Heart right ventricle (tissue), 16 donors: ENCODE measurements at regions of chr7 and their contacts with region 1.

Region 1: DNA sequence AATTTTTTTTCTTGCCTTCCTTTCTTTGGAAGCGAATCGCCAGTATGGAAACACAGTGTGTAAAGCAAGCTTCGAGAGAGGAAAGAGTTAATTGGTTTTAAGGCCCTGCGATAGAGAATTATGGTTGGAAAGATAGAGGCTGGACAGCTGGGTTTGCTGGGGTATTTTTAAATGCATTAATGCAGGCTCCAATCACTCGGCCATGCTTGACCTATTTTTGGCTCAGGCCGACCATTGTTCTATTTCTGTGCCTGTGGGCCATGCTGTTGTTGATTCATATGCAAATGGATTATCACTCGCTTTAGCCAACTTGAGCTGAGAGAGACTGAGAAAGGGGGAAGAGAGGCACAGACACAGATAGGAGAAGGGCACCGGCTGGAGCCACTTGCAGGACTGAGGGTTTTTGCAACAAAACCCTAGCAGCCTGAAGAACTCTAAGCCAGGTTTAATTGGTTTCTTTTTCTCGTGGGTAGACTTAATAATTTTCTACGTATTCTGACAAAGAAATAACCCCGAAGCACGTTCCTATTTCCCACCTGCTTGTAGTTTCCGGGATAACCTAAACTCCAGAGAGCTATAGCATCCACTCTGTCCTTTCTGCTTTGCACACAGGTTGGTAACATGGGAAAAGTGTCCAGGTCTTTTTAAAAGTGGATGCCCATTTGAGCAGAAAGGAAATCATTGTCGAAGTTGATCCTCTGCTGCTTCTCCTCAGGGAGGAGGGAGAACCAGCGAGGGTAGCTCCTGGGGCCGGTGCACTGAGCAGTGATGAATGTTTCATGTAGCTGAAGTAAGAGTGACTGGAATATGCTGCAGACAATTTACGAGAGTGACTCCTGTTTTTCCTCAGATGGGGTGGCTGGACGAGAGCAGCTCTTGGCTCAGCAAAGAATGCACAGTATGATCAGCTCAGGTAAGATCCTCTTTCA is at the start of gene HDAC9:
- DNase-seq: peak; percentile 17 to 73
- ATAC-seq: peak; percentile 85 to 95 (median 92)
- H3K4me3 ChIP-seq: peak within 1 kb of the TSS; percentile 30 to 64 (median 54)
- H3K27ac ChIP-seq: peak within 1 kb of the TSS; percentile 1 to 86 (median 84)
- H3K4me1 ChIP-seq: peaks cover 0 to 43% (median 19%) of the 10 kb centered on the region in 9 donors
- H3K27me3 ChIP-seq: no peaks in the 10 kb centered on the region
- CTCF ChIP-seq: no peak
- total RNA-seq, gene HDAC9: 8.3 to 66.1 (median 43.2) TPM

Region 2: GRCh38 chr7:18278316-18278715 is 217.4 kb before region 1 on chr7:
- intact Hi-C with region 1: no loop called
- DNase-seq: no peak
- ATAC-seq: no peak
- H3K4me3 ChIP-seq: no peak overlapping the region
- H3K27ac ChIP-seq: no peak overlapping the region
- H3K4me1 ChIP-seq: no peaks in the 10 kb centered on the region
- H3K27me3 ChIP-seq: no peaks in the 10 kb centered on the region
- CTCF ChIP-seq: no peak

Region 3: GRCh38 chr7:18538554-18539250 is 43.0 kb after region 1 on chr7:
- intact Hi-C with region 1: loop called in 1 of 10 experiments (anchors 5 kb)
- DNase-seq: no peak
- ATAC-seq: no peak
- H3K4me3 ChIP-seq: no peak overlapping the region
- H3K27ac ChIP-seq: no peak overlapping the region
- H3K4me1 ChIP-seq: peaks cover 0 to 64% (median 26%) of the 10 kb centered on the region in 9 donors
- H3K27me3 ChIP-seq: no peaks in the 10 kb centered on the region
- CTCF ChIP-seq: no peak

Region 4: DNA sequence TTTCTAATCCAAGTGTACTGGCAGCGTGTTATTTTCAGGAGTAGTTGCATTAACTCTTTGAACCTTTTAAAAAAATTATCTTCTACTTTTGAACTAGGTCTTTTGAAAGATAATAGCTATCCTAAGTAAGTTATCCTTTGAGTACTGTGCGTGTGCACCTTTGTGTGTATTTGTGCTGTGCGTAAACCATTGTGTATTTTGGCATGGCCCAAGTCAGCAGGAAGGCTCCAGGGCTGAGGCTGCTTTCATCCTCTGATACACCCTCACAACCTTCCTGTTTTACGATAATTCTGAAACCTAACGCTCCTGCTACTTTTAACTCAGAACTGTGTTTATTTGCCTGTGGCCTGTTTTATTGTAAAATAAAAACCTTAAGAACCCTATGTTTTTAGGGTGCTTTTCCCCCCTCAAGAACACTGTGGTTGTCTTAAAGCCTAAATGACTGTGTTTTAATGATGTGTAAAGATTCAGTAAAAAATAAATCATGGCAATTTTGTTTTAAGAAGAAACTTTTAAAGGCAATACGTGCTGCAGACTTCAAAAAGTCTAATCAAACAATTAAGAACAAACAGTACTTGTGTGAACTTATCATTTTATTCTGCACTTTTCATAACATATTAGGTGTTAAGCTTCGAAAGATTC is 57.4 kb after region 1 on chr7:
- intact Hi-C with region 1: loop called in 1 of 10 experiments (anchors 5 kb)
- DNase-seq: no peak
- ATAC-seq: peak in 6 of 8 donors; percentile 46 to 78 (median 70)
- H3K4me3 ChIP-seq: peak overlapping the region in 1 of 10 donors; percentile 4
- H3K27ac ChIP-seq: peak overlapping the region in 8 of 10 donors; percentile 1 to 59 (median 23)
- H3K4me1 ChIP-seq: peaks cover 0 to 62% (median 44%) of the 10 kb centered on the region in 9 donors
- H3K27me3 ChIP-seq: no peaks in the 10 kb centered on the region
- CTCF ChIP-seq: no peak

Region 5: GRCh38 chr7:18570890-18571478 is 75.3 kb after region 1 on chr7:
- intact Hi-C with region 1: loop called in 5 of 10 experiments (anchors 2 to 5 kb)
- DNase-seq: no peak
- ATAC-seq: peak in 7 of 8 donors; percentile 20 to 57 (median 49)
- H3K4me3 ChIP-seq: no peak overlapping the region
- H3K27ac ChIP-seq: peak overlapping the region in 1 of 10 donors; percentile 35
- H3K4me1 ChIP-seq: peaks cover 0 to 26% (median 13%) of the 10 kb centered on the region in 9 donors
- H3K27me3 ChIP-seq: no peaks in the 10 kb centered on the region
- CTCF ChIP-seq: peak in 8 of 9 donors; percentile 9 to 72 (median 60)

Region 6: DNA sequence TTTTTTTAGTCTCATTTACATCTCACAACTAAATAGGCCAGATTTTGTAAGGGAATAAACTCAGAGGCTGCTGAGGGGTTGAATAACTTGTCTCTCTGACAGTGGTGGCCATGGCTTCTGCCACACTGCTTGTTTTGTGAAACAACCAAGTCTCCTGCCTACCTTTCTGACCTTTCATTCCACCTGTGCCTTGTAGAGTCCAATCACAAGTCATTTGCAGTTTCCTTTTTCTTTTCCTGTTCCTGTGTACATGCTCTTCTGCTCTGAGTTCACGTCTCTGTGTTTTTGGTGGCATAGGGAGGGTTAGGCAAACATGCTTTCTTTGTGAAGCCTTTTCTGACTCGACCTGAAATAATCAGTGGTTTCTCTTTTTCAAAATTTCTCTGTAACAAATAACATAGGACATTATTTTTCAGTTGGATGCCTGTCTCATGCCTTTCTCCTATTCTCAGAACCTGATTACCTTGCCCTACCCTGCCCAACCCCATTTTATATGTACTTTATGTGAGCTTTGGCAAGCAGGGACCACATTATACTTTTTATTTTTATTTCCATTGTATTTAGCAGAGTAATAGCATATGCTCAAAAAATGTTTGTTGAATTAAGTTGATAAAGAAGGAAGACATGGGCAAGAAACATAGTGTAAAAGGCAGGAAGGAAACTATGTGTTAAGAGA is 81.6 kb after region 1 on chr7:
- intact Hi-C with region 1: loop called in 4 of 10 experiments (anchors 5 kb)
- DNase-seq: no peak
- ATAC-seq: no peak
- H3K4me3 ChIP-seq: no peak overlapping the region
- H3K27ac ChIP-seq: peak overlapping the region in 1 of 10 donors; percentile 13
- H3K4me1 ChIP-seq: peaks cover 0 to 26% (median 14%) of the 10 kb centered on the region in 9 donors
- H3K27me3 ChIP-seq: no peaks in the 10 kb centered on the region
- CTCF ChIP-seq: no peak

Region 7: DNA sequence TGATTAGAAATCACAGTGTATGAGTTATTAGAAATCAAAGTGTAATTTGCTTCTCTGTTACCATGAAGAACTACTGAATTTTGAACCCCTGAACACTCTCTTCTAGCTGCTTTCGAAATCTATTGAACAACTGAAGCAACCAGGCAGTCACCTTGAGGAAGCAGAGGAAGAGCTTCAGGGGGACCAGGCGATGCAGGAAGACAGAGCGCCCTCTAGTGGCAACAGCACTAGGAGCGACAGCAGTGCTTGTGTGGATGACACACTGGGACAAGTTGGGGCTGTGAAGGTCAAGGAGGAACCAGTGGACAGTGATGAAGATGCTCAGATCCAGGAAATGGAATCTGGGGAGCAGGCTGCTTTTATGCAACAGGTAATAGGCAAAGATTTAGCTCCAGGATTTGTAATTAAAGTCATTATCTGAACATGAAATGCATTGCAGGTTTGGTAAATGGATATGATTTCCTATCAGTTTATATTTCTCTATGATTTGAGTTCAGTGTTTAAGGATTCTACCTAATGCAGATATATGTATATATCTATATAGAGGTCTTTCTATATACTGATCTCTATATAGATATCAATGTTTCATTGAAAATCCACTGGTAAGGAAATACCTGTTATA is 170.5 kb after region 1 on chr7:
- intact Hi-C with region 1: loop called in 1 of 10 experiments (anchors 10 kb)
- DNase-seq: peak; percentile 72 to 84
- ATAC-seq: peak; percentile 86 to 97 (median 87)
- H3K4me3 ChIP-seq: no peak overlapping the region
- H3K27ac ChIP-seq: no peak overlapping the region
- H3K4me1 ChIP-seq: peaks cover 0 to 29% (median 13%) of the 10 kb centered on the region in 9 donors
- H3K27me3 ChIP-seq: no peaks in the 10 kb centered on the region
- CTCF ChIP-seq: peak; percentile 78 to 97 (median 92)